ENCODE measurements at regions of chr1 and their contacts with region 1.

Region 1: GRCh38 chr1:89125913-89126580 is at the start of gene GBP2:
- DNase-seq: peak; percentile 30
- ATAC-seq: peak; percentile 73
- H3K4me3 Mint-ChIP-seq: peak within 1 kb of the TSS; percentile 87
- H3K27ac Mint-ChIP-seq: peak within 1 kb of the TSS; percentile 99
- H3K4me1 Mint-ChIP-seq: peaks cover 48% of the 10 kb centered on the region
- H3K27me3 Mint-ChIP-seq: no peaks in the 10 kb centered on the region
- CTCF ChIP-seq: no peak
- total RNA-seq, gene GBP2: 181 to 189 TPM

Region 2: DNA sequence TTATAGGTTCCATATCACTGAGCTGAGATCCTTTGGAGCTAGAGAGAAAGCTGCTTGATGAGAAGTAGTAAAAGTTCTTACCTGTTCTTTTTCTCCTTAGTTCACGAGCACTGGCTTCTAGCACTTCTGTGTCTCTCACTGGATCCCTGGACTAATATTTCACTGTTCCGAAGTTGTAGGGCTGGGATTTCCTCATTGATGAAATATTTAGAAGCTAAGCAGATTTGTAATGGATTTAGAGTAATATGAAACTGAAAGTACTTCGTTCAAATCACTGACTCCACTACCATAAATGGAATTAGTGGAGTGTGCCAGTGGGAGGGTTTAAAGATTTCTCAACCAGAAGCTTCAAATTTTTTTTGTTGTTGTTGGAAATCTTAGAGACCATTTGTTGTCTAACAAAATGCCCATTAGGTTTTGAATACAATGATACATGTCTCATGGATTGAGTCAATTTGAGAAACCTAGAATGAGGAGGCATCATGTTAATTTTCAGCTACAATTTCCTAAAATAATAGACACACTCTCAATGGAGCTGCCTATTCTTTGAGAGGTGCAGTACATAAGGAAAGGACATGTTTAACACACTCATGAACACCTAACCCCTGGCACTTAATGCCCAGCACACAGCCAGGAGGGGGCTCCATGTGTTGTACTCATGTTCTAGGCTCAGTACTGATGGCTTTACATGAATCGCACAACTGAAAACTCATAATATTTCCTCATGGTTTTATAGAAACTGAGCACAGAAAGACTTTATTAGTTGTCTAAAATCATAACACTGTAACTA is 60.8 kb before region 1 on chr1 and contains the start of gene GBP1:
- CTCF ChIA-PET with region 1: no interaction called
- POLR2A ChIA-PET with region 1: interaction called, 16 read pairs
- intact Hi-C with region 1: no loop called
- DNase-seq: no peak
- ATAC-seq: peak; percentile 77
- H3K4me3 Mint-ChIP-seq: peak within 1 kb of the TSS; percentile 97
- H3K27ac Mint-ChIP-seq: peak within 1 kb of the TSS; percentile 92
- H3K4me1 Mint-ChIP-seq: peaks cover 57% of the 10 kb centered on the region
- H3K27me3 Mint-ChIP-seq: no peaks in the 10 kb centered on the region
- CTCF ChIP-seq: no peak
- total RNA-seq, gene GBP1: 69.6 to 71.5 TPM

Region 3: DNA sequence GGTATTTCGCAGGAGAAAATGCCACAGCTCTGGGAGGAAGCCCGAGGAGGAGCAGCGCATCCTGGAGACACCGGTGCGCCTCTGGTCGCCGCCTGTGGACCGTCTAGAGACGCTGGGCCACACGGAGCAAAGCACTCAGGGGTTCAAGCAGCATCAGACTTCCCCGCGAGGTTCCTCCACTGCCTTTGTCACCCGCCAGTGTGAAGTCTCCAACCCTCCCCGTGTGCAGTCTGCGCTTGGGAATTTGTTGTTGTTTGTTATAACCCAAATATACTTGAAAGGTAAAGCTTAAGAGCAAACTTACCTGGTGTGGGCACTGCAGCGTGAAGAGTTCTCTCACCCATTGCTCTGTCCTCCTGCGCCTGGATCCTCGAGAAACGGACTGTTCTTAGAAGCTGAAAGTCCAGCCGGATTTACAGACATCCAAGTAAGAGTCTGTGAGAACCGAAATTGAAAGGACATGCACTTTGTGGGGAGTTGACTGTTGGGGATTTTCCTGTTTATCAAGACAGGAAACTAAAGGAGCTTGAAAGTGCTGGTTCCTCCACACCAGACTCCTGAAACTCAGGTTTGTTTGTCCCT is 72.5 kb after region 1 on chr1 and contains the start of gene GBP4:
- CTCF ChIA-PET with region 1: interaction called, 5 read pairs
- POLR2A ChIA-PET with region 1: interaction called, 40 read pairs
- intact Hi-C with region 1: loop called (anchors 1 kb)
- DNase-seq: peak; percentile 61
- ATAC-seq: peak; percentile 58
- H3K4me3 Mint-ChIP-seq: peak within 1 kb of the TSS; percentile 92
- H3K27ac Mint-ChIP-seq: peak within 1 kb of the TSS; percentile 97
- H3K4me1 Mint-ChIP-seq: peaks cover 76% of the 10 kb centered on the region
- H3K27me3 Mint-ChIP-seq: no peaks in the 10 kb centered on the region
- CTCF ChIP-seq: no peak
- total RNA-seq, gene GBP4: 34.2 to 38.3 TPM

Region 4: DNA sequence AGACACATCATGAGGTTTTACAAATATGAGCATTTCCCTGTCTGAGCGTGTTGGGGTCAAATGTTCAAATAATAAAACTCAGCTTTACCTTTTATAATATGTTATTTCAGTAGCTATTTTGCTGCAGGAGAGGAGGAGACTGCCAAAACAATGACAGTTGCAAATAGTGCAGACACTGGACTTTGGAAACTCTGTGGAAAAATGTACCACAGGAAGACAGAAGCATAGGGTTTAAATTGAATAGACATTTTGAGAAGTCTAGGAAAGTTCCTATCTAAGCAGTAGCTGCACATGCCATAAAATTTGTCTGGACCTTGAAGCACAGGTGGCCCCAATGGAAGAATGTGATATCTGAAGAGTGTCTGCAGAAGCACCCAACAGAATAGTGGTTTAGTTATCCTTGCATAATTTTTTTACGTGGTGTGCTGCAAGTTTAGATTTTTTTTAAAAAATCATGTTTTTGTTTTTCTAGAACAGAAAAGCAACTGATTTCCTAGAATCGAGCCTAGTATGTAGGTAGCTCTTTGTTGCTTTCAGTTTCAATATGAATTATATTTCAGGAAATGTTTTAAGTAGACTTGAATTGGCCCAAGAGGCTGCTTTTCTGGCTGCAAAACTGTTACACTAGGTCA is 160.6 kb after region 1 on chr1:
- CTCF ChIA-PET with region 1: no interaction called
- POLR2A ChIA-PET with region 1: interaction called, 10 read pairs
- intact Hi-C with region 1: no loop called
- DNase-seq: peak; percentile 33
- ATAC-seq: peak; percentile 69
- H3K4me3 Mint-ChIP-seq: peak overlapping the region; percentile 39
- H3K27ac Mint-ChIP-seq: peak overlapping the region; percentile 87
- H3K4me1 Mint-ChIP-seq: peaks cover 71% of the 10 kb centered on the region
- H3K27me3 Mint-ChIP-seq: no peaks in the 10 kb centered on the region
- CTCF ChIP-seq: no peak

Measured in activated CD8-positive, alpha-beta T cell treated with anti-CD3 and anti-CD28 coated beads for 36 hours (primary cell).